ENCODE measurements at regions of chr11 and their contacts with region 1.

Region 1: DNA sequence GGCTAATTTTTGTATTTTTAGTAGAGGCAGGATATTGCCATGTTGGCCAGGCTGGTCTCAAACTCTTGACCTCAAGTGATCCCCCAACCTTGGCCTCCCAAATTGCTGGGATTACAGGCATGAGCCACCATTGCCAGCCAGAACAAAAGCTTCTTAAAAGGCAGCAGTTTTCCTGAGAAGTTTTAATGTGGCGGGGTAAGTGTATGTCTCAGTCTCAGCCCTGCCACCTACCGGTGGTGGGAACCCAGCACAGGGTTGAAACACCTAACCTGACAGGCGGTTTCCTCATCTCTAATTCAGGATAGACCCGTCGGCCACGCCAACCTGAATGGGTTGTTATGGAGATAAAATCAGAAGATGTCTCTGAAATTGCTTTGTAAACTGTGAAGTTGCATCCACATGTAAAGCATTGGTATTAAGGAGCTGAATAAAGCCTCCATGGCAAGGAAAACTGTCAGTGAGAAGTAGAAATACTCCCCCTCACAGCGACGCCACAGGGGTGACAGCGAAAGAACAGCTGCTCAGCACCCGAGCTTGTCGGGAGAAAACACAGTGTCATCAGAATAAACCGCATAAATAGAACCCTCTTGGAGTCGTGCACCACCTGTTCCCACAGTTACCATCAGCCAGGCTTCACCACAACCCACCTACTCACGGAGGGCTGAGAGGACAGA is 165.9 kb upstream of the NCAM1 start:
- DNase-seq: peak; percentile 53
- H3K4me3 ChIP-seq: no peak overlapping the region
- H3K27ac ChIP-seq: no peak overlapping the region
- H3K4me1 ChIP-seq: no peaks in the 10 kb centered on the region
- H3K27me3 ChIP-seq: no peaks in the 10 kb centered on the region
- CTCF ChIP-seq: peak; percentile 87

Region 2: DNA sequence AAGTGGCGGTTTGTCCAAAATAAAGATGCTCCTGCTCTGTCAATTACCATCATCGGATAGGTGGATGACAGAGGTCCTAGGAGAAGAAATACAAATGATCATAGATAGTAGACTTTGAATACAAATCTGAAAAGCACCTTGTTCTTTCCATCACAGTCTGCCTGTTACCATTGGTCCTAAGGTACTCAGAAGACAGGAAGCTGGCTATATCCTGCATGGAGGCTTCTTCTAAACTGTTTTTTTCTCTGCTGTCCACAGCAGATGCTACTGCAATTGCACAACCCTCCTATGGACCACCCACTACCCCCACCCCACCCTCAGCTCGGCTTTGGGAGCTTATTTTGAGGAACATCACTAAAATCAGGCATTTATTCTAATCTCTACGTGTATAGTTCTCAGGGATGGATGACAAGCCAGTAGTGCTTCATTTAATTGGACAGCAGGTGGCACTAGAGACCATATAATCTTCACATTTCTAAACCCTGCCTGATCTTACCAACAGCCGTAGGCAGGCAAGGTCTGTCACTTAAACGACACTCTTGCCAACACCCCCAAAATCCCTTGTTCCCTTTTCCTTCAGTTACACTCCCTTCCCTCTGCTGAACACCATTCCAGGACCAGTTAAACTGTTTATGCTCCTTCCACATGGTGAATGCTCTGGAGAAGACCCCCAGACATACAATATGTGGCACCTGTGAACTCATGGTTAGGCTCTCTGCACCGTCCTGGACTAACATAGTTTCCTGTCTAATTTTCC is 575.6 kb before region 1 on chr11:
- CTCF ChIA-PET with region 1: no interaction called
- dilution Hi-C with region 1: no loop called
- in situ Hi-C with region 1: no loop called
- intact Hi-C with region 1: loop called (anchors 5 kb)
- DNase-seq: peak; percentile 53
- H3K4me3 ChIP-seq: no peak overlapping the region
- H3K27ac ChIP-seq: no peak overlapping the region
- H3K4me1 ChIP-seq: peaks cover 6% of the 10 kb centered on the region
- H3K27me3 ChIP-seq: no peaks in the 10 kb centered on the region
- CTCF ChIP-seq: peak; percentile 63 to 64

Region 3: GRCh38 chr11:112440518-112440917 is 354.8 kb before region 1 on chr11:
- CTCF ChIA-PET with region 1: interaction called, 9 read pairs
- dilution Hi-C with region 1: no loop called
- in situ Hi-C with region 1: no loop called
- intact Hi-C with region 1: loop called (anchors 10 kb)
- DNase-seq: peak; percentile 19
- H3K4me3 ChIP-seq: no peak overlapping the region
- H3K27ac ChIP-seq: no peak overlapping the region
- H3K4me1 ChIP-seq: no peaks in the 10 kb centered on the region
- H3K27me3 ChIP-seq: peaks cover 10% of the 10 kb centered on the region
- CTCF ChIP-seq: peak; percentile 44 to 45

Region 4: DNA sequence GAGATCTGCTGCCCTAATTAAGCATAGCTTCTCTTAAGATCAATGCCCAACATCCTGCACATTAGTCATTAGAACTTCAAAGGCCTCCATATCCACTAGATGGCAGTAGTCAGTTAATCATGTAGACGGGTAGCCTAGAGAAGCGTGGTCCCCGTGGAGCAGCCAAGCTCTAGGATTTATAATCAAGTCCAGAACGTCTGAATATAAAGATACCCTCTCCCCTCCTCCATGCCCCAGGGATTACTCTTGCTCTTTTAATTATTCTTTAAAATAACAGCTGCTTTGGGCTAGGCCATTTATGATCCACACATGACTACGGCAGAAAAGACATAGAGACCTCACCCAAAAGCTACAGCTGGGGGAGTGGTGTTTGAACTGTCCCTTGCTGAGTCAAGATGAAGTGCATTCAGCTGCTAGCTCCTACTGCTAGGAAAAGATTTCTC is 207.0 kb before region 1 on chr11:
- CTCF ChIA-PET with region 1: interaction called, 36 read pairs
- dilution Hi-C with region 1: no loop called
- in situ Hi-C with region 1: loop called (anchors 5 kb)
- intact Hi-C with region 1: loop called (anchors 1 kb)
- DNase-seq: peak; percentile 74
- H3K4me3 ChIP-seq: no peak overlapping the region
- H3K27ac ChIP-seq: no peak overlapping the region
- H3K4me1 ChIP-seq: no peaks in the 10 kb centered on the region
- H3K27me3 ChIP-seq: no peaks in the 10 kb centered on the region
- CTCF ChIP-seq: peak; percentile 52 to 73

Region 5: DNA sequence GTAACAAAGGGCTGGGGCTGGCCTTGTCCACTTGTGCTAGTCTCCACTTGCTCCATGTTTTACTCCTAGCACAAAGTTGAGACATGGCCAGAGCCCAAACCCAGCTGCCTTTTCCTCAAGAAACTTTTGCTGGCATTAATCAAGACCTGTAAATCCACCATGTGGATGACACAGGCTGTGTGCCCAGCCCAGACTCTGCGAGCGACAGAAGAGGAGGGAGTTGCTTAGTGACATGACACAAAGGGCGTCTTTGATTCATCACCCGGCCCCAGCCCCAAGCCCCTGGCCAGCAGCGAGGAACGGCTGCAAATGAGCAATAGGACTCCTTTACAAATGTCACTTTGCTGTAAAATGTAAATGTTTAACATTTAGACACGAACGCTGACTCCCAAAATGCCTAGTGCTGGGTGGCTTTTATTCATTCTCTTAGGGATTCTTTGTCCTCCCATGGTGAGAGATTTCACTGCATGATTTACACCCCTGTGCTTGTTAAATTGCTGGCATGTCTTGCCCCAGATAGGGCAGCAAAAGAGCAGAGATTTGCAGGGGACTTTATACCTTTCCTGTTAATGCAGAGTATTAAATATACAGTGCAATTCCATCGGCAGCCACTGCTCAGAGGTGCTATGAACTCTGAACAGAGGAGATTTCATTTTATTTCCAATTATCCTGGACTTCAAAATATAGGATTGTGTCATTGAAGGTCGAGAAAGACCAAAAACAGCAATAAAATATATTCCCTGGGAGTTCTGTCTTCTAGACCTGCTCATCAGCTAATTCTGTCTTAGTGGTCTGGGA is 97.7 kb before region 1 on chr11:
- CTCF ChIA-PET with region 1: no interaction called
- dilution Hi-C with region 1: loop called (anchors 5 kb)
- in situ Hi-C with region 1: no loop called
- intact Hi-C with region 1: no loop called
- DNase-seq: no peak
- H3K4me3 ChIP-seq: no peak overlapping the region
- H3K27ac ChIP-seq: no peak overlapping the region
- H3K4me1 ChIP-seq: peaks cover 14% of the 10 kb centered on the region
- H3K27me3 ChIP-seq: no peaks in the 10 kb centered on the region
- CTCF ChIP-seq: peak; percentile 13 to 25

Region 6: DNA sequence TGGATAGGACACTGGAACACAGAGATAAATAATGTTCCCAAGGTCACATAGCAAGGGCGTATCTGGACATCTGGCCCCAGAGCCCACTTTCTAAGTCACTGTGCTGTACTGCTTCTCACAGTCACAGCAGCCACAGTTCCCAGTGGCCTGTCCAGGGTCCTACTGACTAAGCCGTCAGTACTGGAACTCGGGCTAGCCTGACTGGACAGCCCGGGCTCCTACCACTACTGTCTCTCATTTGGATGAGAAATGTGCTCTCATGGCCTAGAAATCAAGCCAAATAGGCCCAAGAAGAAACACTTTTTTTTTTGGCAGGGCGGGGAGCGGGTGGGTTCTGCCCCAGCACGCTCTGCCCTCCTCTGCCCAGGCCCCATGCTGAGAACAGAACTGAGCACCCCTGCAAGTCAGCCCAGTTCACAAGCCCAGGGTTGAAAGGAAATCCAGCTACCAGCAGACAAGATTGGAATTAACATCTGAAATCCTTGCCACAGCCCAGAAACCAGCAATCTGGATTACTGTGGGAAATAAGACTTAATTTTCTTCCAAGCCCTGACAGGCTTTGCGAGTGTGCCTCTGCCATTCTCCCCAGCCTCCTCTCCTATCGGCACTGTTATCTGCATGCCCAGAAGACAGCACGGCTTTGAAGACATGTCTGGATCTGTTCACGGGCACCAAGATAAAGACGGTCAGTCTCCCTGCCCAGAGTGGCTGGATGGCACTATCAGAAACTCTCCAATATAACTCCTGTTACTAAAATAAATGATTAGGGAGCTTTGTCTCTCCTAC is 17.0 kb before region 1 on chr11:
- CTCF ChIA-PET with region 1: no interaction called
- dilution Hi-C with region 1: no loop called
- in situ Hi-C with region 1: no loop called
- intact Hi-C with region 1: loop called (anchors 1 kb)
- DNase-seq: peak; percentile 17
- H3K4me3 ChIP-seq: no peak overlapping the region
- H3K27ac ChIP-seq: no peak overlapping the region
- H3K4me1 ChIP-seq: peaks cover 9% of the 10 kb centered on the region
- H3K27me3 ChIP-seq: no peaks in the 10 kb centered on the region
- CTCF ChIP-seq: no peak

Region 7: DNA sequence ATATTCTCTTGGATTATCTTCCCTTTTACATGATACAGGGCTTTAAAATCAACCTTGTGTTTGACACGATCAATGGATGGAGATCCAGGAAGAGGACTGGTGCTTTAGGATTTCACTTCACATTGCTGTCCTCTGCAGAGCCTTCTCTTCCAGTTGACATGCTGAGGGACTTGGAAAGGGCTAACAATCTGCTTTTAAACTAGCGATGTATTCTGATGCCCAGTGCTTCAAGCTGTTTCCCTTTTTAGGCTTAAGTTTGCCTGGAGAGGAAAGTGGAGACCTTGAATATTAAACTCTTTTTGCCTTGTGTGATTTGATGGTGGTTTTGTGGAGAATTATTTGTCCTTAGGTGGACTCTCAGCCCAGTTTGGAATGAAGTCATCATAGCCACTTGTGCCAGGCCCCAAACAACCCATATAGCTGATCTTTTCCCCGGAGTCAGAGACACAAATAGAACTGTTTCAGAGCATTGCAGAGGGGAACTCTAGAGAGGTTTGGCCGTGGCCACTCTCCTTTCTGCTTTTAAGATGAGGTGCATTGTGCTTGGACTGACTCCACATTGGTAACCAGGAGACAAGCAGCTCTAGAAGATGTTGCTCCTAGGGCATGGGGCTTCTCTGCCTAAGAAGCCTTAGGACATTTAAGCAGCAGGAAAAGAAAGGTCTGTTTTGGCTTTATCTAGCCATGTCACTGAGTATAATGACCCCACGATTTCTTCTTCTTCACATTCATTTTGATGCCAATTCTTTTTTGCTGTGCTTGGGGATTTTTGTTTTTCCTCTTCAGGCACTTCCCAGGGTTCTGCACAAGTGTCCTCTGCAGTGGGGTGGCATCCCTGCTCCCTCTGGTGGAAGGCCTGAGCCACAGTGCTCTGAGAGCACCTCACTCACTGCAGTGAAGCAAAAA is 318.8 kb after region 1 on chr11:
- CTCF ChIA-PET with region 1: no interaction called
- dilution Hi-C with region 1: no loop called
- in situ Hi-C with region 1: no loop called
- intact Hi-C with region 1: loop called (anchors 1 kb)
- DNase-seq: peak; percentile 49
- H3K4me3 ChIP-seq: no peak overlapping the region
- H3K27ac ChIP-seq: no peak overlapping the region
- H3K4me1 ChIP-seq: no peaks in the 10 kb centered on the region
- H3K27me3 ChIP-seq: peaks cover 7% of the 10 kb centered on the region
- CTCF ChIP-seq: peak; percentile 76 to 93